Activated CD4-positive, alpha-beta memory T cell treated with anti-CD3 and anti-CD28 coated beads, Interleukin-2, amount 10 ng/mL, durations not matched to agents 7 days and 5 days (primary cell): ENCODE measurements at regions of chr5 and their contacts with region 1.

Region 1: GRCh38 chr5:139341650-139342422 is at the start of gene PAIP2:
- DNase-seq: peak; percentile 97
- H3K4me3 Mint-ChIP-seq: peak within 1 kb of the TSS; percentile 98
- H3K27ac Mint-ChIP-seq: peak within 1 kb of the TSS; percentile 99
- H3K4me1 Mint-ChIP-seq: peaks cover 48% of the 10 kb centered on the region
- H3K27me3 Mint-ChIP-seq: no peaks in the 10 kb centered on the region
- total RNA-seq, gene PAIP2: 127 to 130 TPM

Region 2: DNA sequence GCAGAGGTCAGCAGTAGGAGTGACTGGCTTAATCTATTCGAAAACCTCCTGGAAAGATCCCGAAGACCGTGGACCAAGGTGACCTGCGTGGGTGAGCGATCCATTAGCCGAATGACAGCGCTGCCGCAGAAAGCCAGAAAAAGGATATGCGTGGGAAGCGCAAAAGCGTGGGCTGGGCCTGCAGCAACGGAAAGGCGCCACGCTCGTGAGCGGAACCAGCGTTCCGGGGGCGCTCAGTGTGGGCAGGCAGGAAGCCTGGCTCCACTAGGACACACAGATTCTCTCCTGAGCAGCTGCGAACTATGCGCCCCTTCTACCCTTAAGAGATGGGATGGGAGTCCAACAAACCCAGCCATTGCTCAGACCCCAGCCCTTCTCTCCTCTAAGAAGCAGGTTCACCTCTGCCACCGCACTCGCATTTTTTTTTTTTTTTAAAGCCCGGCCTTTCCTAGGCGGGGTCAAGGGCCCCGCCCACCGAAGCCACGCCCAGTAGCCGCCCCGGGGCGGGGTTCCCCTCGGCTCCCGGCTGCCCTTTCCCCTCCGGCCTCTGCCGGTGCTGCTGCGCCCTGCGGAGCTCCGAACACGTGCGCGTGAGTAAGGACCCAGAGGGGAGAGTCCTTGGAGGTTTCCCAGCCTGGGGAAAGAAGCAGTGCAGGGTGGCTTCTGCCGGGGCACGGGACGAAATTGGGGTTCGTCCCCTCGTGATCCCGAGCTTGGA is 68.1 kb before region 1 on chr5:
- CTCF ChIA-PET with region 1: interaction called, 3 read pairs
- POLR2A ChIA-PET with region 1: interaction called, 24 read pairs
- DNase-seq: peak; percentile 91
- H3K4me3 Mint-ChIP-seq: peak overlapping the region; percentile 85
- H3K27ac Mint-ChIP-seq: peak overlapping the region; percentile 81
- H3K4me1 Mint-ChIP-seq: peaks cover 60% of the 10 kb centered on the region
- H3K27me3 Mint-ChIP-seq: peaks cover 4% of the 10 kb centered on the region

Region 3: DNA sequence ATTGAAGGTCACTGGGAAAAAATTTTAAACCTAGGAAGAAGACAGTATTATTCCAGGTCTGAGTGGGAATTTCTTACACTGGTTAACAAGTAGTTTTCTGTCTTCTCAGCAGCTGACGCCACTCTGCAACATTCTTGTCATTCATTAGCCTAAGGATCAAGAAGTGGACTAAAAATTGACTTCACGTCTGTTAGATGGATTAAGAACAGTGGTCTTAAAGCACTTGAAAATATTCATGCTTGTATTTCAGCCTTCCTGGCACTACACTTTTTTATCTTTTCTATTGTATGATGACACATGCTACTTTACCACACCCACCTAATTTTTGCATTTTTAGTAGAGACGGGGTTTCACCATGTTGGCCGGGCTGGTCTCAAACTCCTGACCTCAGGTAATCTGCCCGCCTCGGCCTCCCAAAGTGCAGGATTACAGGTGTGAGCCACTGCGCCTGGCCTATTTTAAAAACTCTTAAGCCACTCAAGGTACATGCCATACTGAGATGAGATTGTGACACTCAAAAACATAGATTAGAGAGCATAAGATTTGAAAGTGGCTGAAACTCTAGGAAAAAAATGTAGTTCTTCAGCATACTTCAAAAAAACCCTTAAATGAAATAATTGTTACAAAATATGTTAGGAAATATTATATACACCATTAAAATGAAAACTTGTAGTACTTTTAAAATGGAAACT is 39.9 kb before region 1 on chr5:
- CTCF ChIA-PET with region 1: interaction called, 6 read pairs
- POLR2A ChIA-PET with region 1: interaction called, 20 read pairs
- DNase-seq: no peak
- H3K4me3 Mint-ChIP-seq: peak overlapping the region; percentile 4
- H3K27ac Mint-ChIP-seq: peak overlapping the region; percentile 16
- H3K4me1 Mint-ChIP-seq: peaks cover 88% of the 10 kb centered on the region
- H3K27me3 Mint-ChIP-seq: no peaks in the 10 kb centered on the region

Region 4: GRCh38 chr5:139374909-139375308 is 33.1 kb after region 1 on chr5:
- CTCF ChIA-PET with region 1: interaction called, 5 read pairs
- POLR2A ChIA-PET with region 1: interaction called, 12 read pairs
- DNase-seq: no peak
- H3K4me3 Mint-ChIP-seq: no peak overlapping the region
- H3K27ac Mint-ChIP-seq: no peak overlapping the region
- H3K4me1 Mint-ChIP-seq: peaks cover 25% of the 10 kb centered on the region
- H3K27me3 Mint-ChIP-seq: no peaks in the 10 kb centered on the region

Region 5: DNA sequence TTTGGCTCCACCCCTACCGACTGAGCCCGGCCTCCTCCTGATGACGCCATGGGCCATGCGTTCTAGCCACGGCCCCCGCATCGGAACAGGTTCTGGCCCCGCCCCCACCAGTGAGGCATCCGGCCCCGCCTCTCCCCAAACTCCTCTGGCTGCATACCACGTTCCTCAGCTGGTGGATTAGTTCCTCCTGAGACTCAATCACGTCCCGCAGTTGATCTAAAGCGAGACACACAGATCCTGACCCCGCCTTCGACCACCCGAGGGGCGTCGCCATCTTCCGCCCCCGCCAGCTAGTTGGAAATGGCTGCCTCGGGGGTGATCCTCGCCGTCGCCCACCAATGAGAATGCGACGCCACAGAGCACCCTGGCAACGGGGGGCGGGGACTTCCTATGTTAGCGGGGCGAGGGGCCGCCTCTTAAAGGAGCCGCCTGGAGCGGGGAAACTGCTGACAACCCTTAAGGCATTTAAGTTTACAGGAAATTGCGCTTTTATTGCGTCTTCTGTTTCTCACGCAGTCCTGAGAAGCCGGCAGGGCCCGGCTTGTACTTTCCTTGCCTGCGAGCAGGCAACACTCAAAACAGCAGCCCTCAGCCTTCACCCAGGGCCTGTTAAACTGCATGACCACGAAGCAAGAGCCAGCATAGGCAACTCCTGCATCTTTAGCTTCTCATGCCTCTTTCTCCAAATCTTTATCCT is 62.1 kb after region 1 on chr5 and contains the start of gene SPATA24:
- CTCF ChIA-PET with region 1: no interaction called
- POLR2A ChIA-PET with region 1: interaction called, 11 read pairs
- DNase-seq: peak; percentile 99
- H3K4me3 Mint-ChIP-seq: peak within 1 kb of the TSS; percentile 96
- H3K27ac Mint-ChIP-seq: peak within 1 kb of the TSS; percentile 100
- H3K4me1 Mint-ChIP-seq: peaks cover 43% of the 10 kb centered on the region
- H3K27me3 Mint-ChIP-seq: no peaks in the 10 kb centered on the region
- total RNA-seq, gene SPATA24: 9.4 to 9.5 TPM

Region 6: GRCh38 chr5:139560752-139561654 is 219.2 kb after region 1 on chr5 and contains the start of gene UBE2D2:
- CTCF ChIA-PET with region 1: interaction called, 5 read pairs
- POLR2A ChIA-PET with region 1: interaction called, 21 read pairs
- DNase-seq: peak; percentile 98
- H3K4me3 Mint-ChIP-seq: peak within 1 kb of the TSS; percentile 95
- H3K27ac Mint-ChIP-seq: peak within 1 kb of the TSS; percentile 95
- H3K4me1 Mint-ChIP-seq: peaks cover 36% of the 10 kb centered on the region
- H3K27me3 Mint-ChIP-seq: no peaks in the 10 kb centered on the region
- total RNA-seq, gene UBE2D2: 241 to 244 TPM